HEK293 (cell line): ENCODE measurements at regions of chr9 and their contacts with region 1.

Region 1: DNA sequence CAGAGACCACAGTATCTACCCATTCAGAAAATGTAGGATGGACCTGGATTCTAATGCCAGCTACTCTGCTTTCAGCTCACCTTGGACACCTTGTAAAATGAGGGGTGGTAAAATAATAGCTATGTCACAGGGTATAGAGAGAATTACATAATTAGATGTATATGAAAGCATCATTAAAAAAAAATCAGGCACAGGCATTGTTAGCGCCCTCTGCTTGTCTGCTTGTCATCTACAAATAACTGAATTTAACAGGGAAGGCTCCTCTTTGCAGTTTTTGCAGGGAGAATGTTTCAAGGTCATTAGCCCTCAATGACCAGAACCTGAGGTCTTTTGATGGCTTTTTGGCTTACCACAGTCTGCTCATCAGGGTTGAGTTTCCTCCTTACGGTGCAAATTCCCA is 58.0 kb downstream of the GPR21 start:
- H3K4me3 ChIP-seq: no peak overlapping the region
- H3K27ac ChIP-seq: no peak overlapping the region
- H3K4me1 ChIP-seq: no peaks in the 10 kb centered on the region
- CTCF ChIP-seq: no peak

Region 2: GRCh38 chr9:123102375-123103110 is 11.1 kb after region 1 on chr9:
- CTCF ChIA-PET with region 1: interaction called, 12 read pairs
- POLR2A ChIA-PET with region 1: no interaction called
- H3K4me3 ChIP-seq: no peak overlapping the region
- H3K27ac ChIP-seq: no peak overlapping the region
- H3K4me1 ChIP-seq: no peaks in the 10 kb centered on the region
- CTCF ChIP-seq: 0 out of 2 replicates have a peak, but pooled peaks have one; percentile 18